MCF 10A (cell line): ENCODE measurements at regions of chr9 and their contacts with region 1.

Region 1: DNA sequence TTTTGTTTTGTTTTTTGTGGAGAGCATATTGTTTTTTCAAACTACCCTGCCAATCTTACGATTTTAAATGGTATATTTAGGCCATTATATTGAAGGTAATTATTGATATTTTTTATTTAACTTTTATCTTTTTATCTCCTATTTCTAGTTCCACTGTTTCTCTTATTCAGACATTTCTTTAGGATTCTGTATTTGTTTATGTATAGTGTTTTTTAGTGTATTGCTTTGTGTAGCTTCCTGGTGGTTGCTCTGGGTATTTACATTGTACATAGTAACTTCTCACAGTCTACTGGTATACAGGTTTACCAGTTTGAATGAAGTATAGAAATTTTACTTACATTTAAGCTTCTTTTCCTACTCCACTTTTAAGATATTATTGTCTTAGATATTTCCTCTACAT is 63.2 kb downstream of the ERCC6L2 start:
- DNase-seq: peak; percentile 5
- H3K4me3 Mint-ChIP-seq: no peak overlapping the region
- H3K27ac Mint-ChIP-seq: no peak overlapping the region
- H3K4me1 Mint-ChIP-seq: peaks cover 14% of the 10 kb centered on the region
- H3K27me3 Mint-ChIP-seq: no peaks in the 10 kb centered on the region
- CTCF ChIP-seq: no peak

Region 2: DNA sequence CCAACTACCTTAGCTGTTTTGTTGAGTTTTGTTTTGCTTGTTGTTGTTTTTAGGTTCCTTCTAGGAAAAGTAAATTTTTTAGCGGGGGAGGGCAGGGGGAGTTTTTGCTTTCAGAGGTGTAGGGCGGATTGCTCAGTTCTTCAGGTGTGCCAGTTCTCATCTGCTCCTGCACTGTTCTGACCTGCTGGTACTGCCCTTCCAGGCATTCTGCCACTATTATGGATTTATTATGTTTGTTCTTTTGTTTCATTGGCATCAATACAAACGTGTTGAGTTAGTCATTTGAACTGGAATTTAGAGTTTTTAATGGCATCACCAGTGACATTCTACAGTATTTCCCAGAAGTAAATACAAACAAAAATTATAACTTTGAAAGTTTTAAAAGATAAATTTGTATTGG is 37.2 kb before region 1 on chr9:
- CTCF ChIA-PET with region 1: no interaction called
- POLR2A ChIA-PET with region 1: interaction called, 10 read pairs
- intact Hi-C with region 1: no loop called
- DNase-seq: peak; percentile 61
- H3K4me3 Mint-ChIP-seq: peak overlapping the region; percentile 17
- H3K27ac Mint-ChIP-seq: peak overlapping the region; percentile 51
- H3K4me1 Mint-ChIP-seq: peaks cover 8% of the 10 kb centered on the region
- H3K27me3 Mint-ChIP-seq: no peaks in the 10 kb centered on the region
- CTCF ChIP-seq: no peak

Region 3: DNA sequence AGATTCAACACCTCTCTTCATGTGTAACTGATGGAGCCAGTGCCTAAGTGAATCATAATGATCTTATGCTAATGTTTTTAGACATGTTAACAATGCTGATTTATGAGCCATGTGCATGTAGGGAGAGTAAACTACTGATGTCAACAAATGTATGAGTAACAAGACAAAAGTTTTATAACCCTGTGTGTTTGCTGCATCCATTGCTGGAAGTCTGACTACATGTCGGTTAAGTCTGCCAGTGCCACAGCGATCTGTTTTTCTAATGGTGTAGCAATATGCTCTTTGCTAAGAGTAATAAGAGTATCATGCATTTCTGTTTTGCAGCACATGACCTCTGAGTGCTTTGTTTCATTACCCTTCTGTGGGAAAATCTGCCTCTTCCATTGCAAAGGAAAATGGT is 1536.3 kb after region 1 on chr9:
- CTCF ChIA-PET with region 1: no interaction called
- POLR2A ChIA-PET with region 1: no interaction called
- intact Hi-C with region 1: no loop called
- DNase-seq: no peak
- H3K4me3 Mint-ChIP-seq: no peak overlapping the region
- H3K27ac Mint-ChIP-seq: no peak overlapping the region
- H3K4me1 Mint-ChIP-seq: no peaks in the 10 kb centered on the region
- H3K27me3 Mint-ChIP-seq: no peaks in the 10 kb centered on the region
- CTCF ChIP-seq: no peak